Transverse colon (tissue), 4 donors: ENCODE measurements at regions of chr5 and their contacts with region 1.

Region 1: GRCh38 chr5:57221049-57221568 is 47.2 kb downstream of the GPBP1 start:
- DNase-seq: no peak
- H3K4me3 ChIP-seq: no peak overlapping the region
- H3K27ac ChIP-seq: peak overlapping the region in 2 of 4 donors; percentile 13 to 38
- H3K4me1 ChIP-seq: peaks cover 3 to 10% (median 5%) of the 10 kb centered on the region in 4 donors
- H3K27me3 ChIP-seq: no peaks in the 10 kb centered on the region
- CTCF ChIP-seq: peak; percentile 81 to 97 (median 95)
- EP300 ChIP-seq: no peak
- POLR2A ChIP-seq: no peak

Region 2: DNA sequence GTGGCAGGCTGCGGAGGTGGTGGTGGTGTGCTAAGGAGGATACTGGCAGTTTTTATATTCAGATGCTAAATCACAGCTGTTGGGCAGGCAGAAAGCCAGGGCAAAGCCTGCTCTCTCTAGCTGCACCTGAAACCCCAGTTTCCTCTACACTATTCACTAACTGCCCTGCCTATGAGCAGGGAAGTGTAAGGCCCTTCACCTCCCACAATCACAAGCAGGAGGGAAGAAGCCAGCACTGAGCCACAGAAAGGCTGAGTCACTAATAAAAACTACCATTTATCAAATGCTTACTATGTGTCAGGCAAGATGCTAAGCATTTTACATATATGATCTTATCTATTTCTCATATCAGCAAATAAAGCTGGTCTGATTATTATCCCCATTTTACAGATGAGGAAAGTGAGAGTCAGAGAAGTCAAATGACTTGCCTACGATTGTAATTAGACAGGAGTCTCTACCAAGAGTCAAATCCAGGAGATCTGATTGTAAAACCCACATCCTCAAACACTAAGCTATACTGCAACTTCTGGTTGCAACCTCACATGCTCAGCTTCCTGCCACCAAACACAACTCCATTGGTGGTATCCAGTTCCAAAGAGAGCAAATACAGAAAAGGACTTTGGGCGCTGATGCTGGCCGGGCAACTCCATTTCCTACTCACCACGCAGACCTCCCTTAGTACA is 1208.7 kb before region 1 on chr5:
- in situ Hi-C with region 1: no loop called
- intact Hi-C with region 1: loop called (anchors 10 kb)
- DNase-seq: peak; percentile 20
- H3K4me3 ChIP-seq: no peak overlapping the region
- H3K27ac ChIP-seq: peak overlapping the region; percentile 37 to 56 (median 48)
- H3K4me1 ChIP-seq: peaks cover 0 to 16% (median 6%) of the 10 kb centered on the region in 4 donors
- H3K27me3 ChIP-seq: no peaks in the 10 kb centered on the region
- CTCF ChIP-seq: no peak
- EP300 ChIP-seq: no peak
- POLR2A ChIP-seq: no peak

Region 3: DNA sequence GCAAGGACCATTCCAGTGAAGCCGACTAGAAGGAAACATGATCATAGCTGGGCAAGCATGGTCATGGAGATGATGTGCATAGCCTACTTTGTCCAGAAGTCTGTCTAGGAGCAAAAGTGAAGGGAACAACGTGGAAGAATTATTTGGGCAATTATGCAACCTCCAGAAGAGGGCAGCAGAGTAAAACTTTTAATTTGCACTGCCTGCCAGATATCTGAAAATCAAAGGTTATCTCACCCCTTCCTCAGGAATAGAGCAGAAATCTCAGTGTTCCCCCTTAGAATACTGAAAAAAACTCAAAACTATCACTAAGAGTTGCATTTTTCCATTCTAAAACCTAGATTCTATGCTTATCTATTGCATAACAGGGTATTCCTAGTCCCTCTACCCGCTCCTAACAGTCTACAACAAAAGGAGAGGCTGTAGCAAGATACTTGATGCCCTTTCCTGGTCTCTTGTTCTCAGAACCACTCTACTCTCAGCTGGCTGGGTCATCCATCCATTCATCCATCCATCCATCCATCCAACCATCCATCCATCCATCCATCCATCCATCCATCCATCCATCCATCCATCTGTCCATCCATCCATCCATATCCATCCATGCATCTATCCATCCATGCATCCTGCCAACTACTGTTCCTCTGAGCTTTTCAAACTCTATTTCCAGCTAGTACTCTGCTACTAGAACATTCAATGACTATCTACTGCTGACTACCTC is 320.1 kb before region 1 on chr5:
- in situ Hi-C with region 1: loop called in 3 of 4 experiments (anchors 5 to 25 kb)
- intact Hi-C with region 1: no loop called
- DNase-seq: no peak
- H3K4me3 ChIP-seq: no peak overlapping the region
- H3K27ac ChIP-seq: no peak overlapping the region
- H3K4me1 ChIP-seq: no peaks in the 10 kb centered on the region
- H3K27me3 ChIP-seq: no peaks in the 10 kb centered on the region
- CTCF ChIP-seq: peak; percentile 70 to 83 (median 72)
- EP300 ChIP-seq: no peak
- POLR2A ChIP-seq: no peak

Region 4: DNA sequence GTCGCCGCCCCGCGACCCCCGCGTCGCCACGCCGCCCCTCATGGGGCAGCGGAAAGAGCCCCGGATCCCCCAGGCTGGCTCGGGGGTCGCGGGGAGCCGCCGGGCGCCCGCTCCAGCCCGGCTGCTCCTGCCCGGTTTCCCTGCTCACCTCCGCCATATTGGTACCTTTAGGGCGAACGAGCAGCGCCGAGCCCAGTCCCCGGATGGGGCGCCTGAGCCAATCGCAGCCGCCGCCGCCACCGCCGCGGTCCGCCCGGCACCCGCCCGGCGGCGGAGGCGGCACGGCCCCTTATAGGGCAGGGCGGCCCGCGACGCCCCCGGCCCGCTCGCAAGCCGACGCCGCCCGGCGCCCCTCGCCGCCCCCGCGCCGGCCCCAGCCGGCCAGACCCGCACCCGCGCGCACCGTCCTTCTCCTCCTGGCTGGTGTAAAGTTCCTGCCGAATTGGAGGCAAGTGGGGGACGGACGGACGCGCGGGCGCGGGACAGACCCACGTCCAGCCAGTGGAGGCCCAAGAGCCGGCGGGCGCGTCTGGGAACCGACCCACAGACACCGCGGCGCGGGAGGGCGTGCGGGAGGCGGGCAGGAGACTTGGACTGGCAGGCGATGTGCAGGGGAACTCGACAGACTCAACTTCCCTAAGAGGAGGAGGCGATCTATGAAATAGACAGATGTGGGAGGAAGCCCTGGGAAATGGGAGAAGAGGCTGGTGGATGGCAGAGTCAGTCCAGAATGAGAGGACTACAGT is 269.0 kb before region 1 on chr5 and contains the start of gene MIER3:
- in situ Hi-C with region 1: no loop called
- intact Hi-C with region 1: loop called (anchors 2 kb)
- DNase-seq: peak; percentile 87
- H3K4me3 ChIP-seq: peak within 1 kb of the TSS; percentile 74 to 96 (median 88)
- H3K27ac ChIP-seq: peak within 1 kb of the TSS; percentile 89 to 94 (median 94)
- H3K4me1 ChIP-seq: peaks cover 4 to 29% (median 14%) of the 10 kb centered on the region in 4 donors
- H3K27me3 ChIP-seq: peaks cover 2% of the 10 kb centered on the region
- CTCF ChIP-seq: no peak
- EP300 ChIP-seq: no peak
- POLR2A ChIP-seq: peak; percentile 29
- total RNA-seq, gene MIER3: 8.8 to 111 (median 60.8) TPM

Region 5: GRCh38 chr5:57184322-57184721 is 36.8 kb before region 1 on chr5:
- in situ Hi-C with region 1: no loop called
- intact Hi-C with region 1: loop called (anchors 5 kb)
- DNase-seq: no peak
- H3K4me3 ChIP-seq: no peak overlapping the region
- H3K27ac ChIP-seq: no peak overlapping the region
- H3K4me1 ChIP-seq: peaks cover 20 to 94% (median 39%) of the 10 kb centered on the region in 4 donors
- H3K27me3 ChIP-seq: no peaks in the 10 kb centered on the region
- CTCF ChIP-seq: no peak
- EP300 ChIP-seq: no peak
- POLR2A ChIP-seq: no peak